ENCODE measurements at regions of chr21 and their contacts with region 1.

Region 1: GRCh38 chr21:33199516-33200217 is 30.1 kb upstream of the IFNAR2 start:
- DNase-seq: peak; percentile 89
- H3K4me3 ChIP-seq: no peak overlapping the region
- H3K27ac ChIP-seq: peak overlapping the region; percentile 33 to 53 (median 48)
- H3K4me1 ChIP-seq: peaks cover 0 to 29% (median 17%) of the 10 kb centered on the region in 4 donors
- H3K27me3 ChIP-seq: no peaks in the 10 kb centered on the region
- CTCF ChIP-seq: peak; percentile 36 to 77 (median 72)
- EP300 ChIP-seq: no peak
- POLR2A ChIP-seq: no peak

Region 2: DNA sequence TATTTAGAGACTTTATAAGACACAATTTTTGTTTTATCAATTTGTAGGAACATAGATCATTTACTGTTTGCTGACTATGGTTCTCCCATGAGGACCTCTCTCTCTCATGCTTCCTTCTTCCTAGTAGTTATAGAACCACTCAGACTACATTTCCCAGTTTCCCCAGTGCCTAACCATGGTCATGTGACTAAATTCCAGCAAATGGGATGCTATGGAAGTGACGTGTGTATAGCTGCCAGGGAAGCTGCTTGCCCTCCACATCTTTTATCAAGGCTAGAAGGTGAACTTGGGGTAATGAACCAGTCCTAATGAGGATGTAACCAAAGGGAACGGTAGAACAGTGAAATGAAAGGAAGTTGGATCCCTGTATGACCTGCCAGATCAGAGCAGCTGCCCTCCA is 1104.9 kb before region 1 on chr21:
- intact Hi-C with region 1: no loop called
- DNase-seq: no peak
- H3K4me3 ChIP-seq: no peak overlapping the region
- H3K27ac ChIP-seq: no peak overlapping the region
- H3K4me1 ChIP-seq: no peaks in the 10 kb centered on the region
- H3K27me3 ChIP-seq: no peaks in the 10 kb centered on the region
- CTCF ChIP-seq: no peak
- EP300 ChIP-seq: no peak
- POLR2A ChIP-seq: no peak

Region 3: DNA sequence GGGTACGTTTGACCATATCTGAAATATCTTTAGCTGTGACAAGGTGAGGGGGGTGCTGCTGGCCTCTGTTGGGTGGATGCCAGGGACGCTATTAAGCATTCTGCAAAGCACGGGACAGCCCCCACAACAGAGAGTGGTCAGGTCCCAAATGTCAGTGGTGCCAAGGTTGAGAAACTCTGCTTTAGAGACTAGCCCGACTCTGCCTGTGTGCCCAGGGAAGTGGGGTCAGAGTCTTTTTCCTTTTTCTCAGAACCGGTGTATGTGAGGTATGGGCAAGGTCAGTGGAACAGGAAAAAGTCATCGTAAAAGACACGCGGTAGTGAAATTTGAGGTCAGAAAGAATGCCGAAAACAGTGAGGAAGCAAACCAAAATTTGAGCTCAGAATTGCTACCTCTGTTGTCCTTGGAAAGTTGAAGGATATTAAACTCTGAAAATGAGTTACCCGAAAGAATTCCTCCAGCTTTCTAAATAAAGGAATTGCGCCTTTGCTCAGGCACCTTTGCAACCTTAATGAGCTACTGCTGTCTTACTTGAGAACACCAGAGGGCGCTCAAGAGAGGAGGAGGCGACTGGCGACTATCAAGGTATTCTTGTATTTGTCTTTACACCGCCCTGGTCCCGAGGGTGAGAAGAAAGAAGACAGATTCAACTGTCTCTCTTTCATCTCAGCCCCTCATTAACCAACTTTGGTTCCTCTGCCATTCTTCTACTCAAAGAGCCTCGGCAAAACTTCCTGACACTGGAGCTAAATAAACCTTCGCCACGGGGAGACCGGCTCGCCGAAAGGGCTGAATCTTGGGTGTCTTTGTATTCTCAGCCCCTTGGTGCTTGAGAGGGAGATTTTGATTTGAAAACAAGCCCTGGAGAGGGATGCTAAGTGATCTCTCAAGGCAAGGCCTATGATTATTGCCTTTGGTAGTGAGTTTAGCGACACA is 259.3 kb before region 1 on chr21:
- intact Hi-C with region 1: loop called (anchors 2 kb)
- DNase-seq: no peak
- H3K4me3 ChIP-seq: no peak overlapping the region
- H3K27ac ChIP-seq: no peak overlapping the region
- H3K4me1 ChIP-seq: no peaks in the 10 kb centered on the region
- H3K27me3 ChIP-seq: peaks cover 0 to 6% (median 0%) of the 10 kb centered on the region in 3 donors
- CTCF ChIP-seq: peak in 3 of 4 experiments; percentile 43 to 63 (median 49)
- EP300 ChIP-seq: no peak
- POLR2A ChIP-seq: no peak

Region 4: DNA sequence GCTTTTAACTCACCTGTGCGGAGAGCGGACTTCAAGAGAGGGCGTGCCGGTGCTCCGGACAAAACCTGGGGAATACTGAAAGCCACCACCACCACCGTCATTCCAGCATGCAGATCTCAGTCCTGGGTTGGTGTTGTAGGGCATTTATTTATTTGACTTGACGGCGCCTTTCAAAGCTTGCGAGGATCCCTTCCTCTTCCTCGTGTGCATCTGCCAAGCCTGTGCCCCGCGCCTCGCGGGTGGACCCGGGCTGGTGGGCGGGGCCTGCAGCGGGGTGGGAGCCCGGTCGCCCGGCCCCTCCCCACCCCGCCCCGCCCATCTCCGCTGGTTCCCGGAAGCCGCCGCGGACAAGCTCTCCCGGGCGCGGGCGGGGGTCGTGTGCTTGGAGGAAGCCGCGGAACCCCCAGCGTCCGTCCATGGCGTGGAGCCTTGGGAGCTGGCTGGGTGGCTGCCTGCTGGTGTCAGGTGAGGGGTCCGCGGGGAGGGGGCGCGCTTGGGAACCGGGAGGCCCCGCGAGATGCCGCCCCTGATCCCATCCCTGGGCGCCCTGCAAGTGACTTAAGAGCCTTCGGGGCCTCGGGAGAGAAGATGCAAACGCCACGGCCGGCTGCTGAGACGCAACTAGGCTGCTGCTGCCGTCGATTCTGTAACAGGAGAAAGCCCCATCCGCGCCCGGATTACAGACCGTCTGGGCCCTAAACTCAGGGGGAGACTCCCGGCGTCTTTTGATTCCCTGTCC is 66.6 kb after region 1 on chr21 and contains the start of gene IL10RB:
- intact Hi-C with region 1: loop called (anchors 5 kb)
- DNase-seq: peak; percentile 80
- H3K4me3 ChIP-seq: peak within 1 kb of the TSS; percentile 76 to 90 (median 78)
- H3K27ac ChIP-seq: peak within 1 kb of the TSS; percentile 80 to 88 (median 86)
- H3K4me1 ChIP-seq: peaks cover 0 to 18% (median 14%) of the 10 kb centered on the region in 4 donors
- H3K27me3 ChIP-seq: no peaks in the 10 kb centered on the region
- CTCF ChIP-seq: no peak
- EP300 ChIP-seq: no peak
- POLR2A ChIP-seq: no peak
- total RNA-seq, gene IL10RB: 15.0 to 26.2 (median 23.6) TPM

Region 5: DNA sequence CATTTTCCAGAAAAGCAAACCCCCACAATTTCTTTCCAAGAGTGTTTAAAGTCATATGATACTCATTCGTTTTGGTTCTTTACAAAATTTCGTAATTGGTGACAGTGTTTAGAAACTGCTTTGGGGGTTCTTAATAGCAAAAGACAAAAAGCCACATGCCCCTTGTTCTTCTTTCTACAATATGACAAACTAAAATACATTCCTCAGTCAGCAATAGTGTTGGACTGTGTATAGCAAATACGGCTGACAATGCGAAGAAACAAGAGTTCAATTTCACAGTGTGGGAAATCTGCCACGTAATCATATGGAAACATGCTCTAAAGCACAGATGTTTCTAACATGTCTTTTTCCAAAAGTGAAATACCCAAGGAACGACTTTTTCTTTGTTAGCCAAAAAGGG is 117.5 kb after region 1 on chr21:
- intact Hi-C with region 1: no loop called
- DNase-seq: no peak
- H3K4me3 ChIP-seq: no peak overlapping the region
- H3K27ac ChIP-seq: no peak overlapping the region
- H3K4me1 ChIP-seq: no peaks in the 10 kb centered on the region
- H3K27me3 ChIP-seq: no peaks in the 10 kb centered on the region
- CTCF ChIP-seq: no peak
- EP300 ChIP-seq: no peak
- POLR2A ChIP-seq: no peak

Region 6: GRCh38 chr21:33441489-33442477 is 242.1 kb after region 1 on chr21:
- intact Hi-C with region 1: loop called (anchors 2 kb)
- DNase-seq: no peak
- H3K4me3 ChIP-seq: no peak overlapping the region
- H3K27ac ChIP-seq: peak overlapping the region in 3 of 4 donors; percentile 39 to 47 (median 45)
- H3K4me1 ChIP-seq: peaks cover 0 to 15% (median 7%) of the 10 kb centered on the region in 4 donors
- H3K27me3 ChIP-seq: no peaks in the 10 kb centered on the region
- CTCF ChIP-seq: no peak
- EP300 ChIP-seq: no peak
- POLR2A ChIP-seq: no peak

Measured in sigmoid colon (tissue), 7 donors.